Activated naive CD4-positive, alpha-beta T cell treated with anti-CD3 and anti-CD28 coated beads for 36 hours (primary cell): ENCODE measurements at regions of chr9 and their contacts with region 1.

Region 1: GRCh38 chr9:114681594-114682332 is at the start of gene TEX48:
- DNase-seq: peak; percentile 92
- H3K4me3 Mint-ChIP-seq: no peak within 1 kb of the TSS
- H3K27ac Mint-ChIP-seq: peak within 1 kb of the TSS; percentile 64
- H3K4me1 Mint-ChIP-seq: peaks cover 39% of the 10 kb centered on the region
- H3K27me3 Mint-ChIP-seq: peaks cover 4% of the 10 kb centered on the region
- total RNA-seq, gene TEX48: not detected

Region 2: GRCh38 chr9:114653556-114654159 is 28.1 kb before region 1 on chr9:
- CTCF ChIA-PET with region 1: interaction called, 12 read pairs
- intact Hi-C with region 1: no loop called
- DNase-seq: peak; percentile 92
- H3K4me3 Mint-ChIP-seq: no peak overlapping the region
- H3K27ac Mint-ChIP-seq: no peak overlapping the region
- H3K4me1 Mint-ChIP-seq: peaks cover 31% of the 10 kb centered on the region
- H3K27me3 Mint-ChIP-seq: no peaks in the 10 kb centered on the region

Region 3: DNA sequence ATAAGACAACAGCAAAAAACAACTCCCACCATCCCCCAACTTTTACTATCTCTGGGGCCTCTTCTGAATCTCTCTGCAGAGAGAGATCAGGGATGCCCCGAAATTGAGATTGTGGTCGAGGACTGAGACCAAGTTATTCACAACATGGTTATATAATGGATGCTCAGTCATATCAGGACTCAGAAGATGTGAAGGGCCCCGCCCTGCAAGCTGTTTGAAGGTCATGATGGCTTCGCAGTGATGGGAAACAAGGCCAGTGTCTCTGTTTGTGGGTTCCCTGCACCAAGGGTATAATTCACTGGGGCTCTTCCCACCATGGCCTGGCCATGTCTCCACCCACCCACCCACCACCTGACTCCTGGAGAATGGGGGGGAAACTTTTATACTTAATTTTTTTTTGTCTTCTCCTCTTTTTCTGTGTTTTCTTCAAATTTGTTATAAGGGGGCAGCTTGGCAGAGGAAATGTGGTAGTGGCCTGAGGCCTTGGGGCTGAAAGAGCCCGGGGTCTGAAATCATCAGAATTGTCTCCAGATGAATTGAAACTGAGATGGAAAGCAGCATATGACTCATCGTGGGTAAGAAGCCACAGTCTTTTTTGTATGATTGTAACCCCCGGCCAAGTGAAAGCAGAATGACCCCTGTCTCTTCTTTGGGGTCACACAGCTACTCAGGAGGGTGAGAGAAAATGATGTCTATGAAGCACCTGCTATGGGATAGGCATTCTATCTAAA is 15.2 kb after region 1 on chr9:
- CTCF ChIA-PET with region 1: interaction called, 33 read pairs
- intact Hi-C with region 1: no loop called
- DNase-seq: peak; percentile 89
- H3K4me3 Mint-ChIP-seq: peak overlapping the region; percentile 54
- H3K27ac Mint-ChIP-seq: peak overlapping the region; percentile 98
- H3K4me1 Mint-ChIP-seq: peaks cover 74% of the 10 kb centered on the region
- H3K27me3 Mint-ChIP-seq: no peaks in the 10 kb centered on the region

Region 4: GRCh38 chr9:114723931-114724330 is 42.2 kb after region 1 on chr9:
- CTCF ChIA-PET with region 1: interaction called, 19 read pairs
- intact Hi-C with region 1: loop called (anchors 5 kb)
- DNase-seq: no peak
- H3K4me3 Mint-ChIP-seq: no peak overlapping the region
- H3K27ac Mint-ChIP-seq: no peak overlapping the region
- H3K4me1 Mint-ChIP-seq: peaks cover 26% of the 10 kb centered on the region
- H3K27me3 Mint-ChIP-seq: peaks cover 5% of the 10 kb centered on the region

Region 5: DNA sequence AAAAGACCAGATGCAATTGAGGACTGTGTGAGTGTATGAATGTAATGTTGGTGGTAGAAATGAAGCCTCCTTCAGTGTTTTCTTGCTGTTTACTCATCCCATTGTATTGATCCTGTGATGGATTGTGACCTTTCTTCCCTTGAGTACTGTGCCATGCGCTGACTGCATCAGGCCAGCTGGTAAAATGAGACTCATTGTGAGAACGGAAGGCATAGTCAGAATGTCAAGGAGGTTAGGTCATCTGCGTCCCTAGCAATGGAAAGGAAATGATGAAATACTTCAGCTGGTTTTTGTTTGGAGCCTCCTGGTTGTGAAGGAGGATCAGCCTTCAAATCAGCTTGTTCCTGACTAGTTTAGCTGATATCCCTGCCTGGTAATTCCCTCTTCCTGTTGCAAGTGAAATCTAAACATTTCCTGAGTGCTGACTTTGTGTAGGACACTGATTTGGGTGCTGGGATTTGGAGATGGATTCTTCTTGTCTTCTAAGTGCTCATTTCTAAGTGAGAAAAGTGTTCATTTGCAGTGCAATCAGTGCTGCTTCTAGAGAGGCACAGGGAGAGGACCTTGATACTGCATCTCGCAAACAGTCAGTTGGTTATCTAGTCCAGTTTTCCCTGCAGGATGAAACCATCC is 213.2 kb after region 1 on chr9:
- CTCF ChIA-PET with region 1: interaction called, 22 read pairs
- intact Hi-C with region 1: no loop called
- DNase-seq: peak; percentile 80
- H3K4me3 Mint-ChIP-seq: no peak overlapping the region
- H3K27ac Mint-ChIP-seq: peak overlapping the region; percentile 85
- H3K4me1 Mint-ChIP-seq: peaks cover 56% of the 10 kb centered on the region
- H3K27me3 Mint-ChIP-seq: no peaks in the 10 kb centered on the region

Region 6: DNA sequence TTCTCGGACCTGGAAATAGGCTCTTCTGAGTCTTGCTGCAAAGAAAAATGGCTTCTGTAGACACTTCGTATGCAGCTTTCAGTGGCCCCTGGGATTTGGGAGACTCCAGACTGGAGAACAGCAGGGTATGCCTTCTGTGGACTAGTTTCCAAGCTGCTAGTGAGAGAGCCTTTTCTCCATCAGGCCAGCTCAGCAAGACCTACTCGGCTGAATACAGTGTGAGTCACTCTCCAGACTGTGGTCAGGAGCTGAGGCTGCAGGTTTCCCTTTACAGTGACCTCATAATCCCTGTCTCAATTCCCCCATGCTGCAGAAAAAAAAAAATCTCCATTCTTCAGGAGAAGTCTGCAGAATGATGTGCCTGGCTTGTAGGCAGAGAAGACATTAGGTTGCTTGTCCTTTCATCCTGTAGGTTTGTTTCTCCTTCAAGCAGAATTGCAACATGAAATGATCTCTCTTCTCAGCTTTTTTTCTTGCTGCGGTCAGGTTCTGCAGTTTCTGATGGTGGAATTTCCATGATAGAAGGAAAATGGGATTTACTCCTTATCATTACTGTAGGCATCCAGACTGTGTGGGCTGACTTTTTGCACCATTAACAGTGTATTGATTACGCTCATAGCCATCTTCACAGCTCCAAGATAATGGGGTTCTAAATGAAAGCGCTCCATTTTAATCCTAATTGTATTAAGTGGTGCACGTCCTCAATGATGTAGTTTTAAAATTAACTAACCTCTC is 326.9 kb after region 1 on chr9:
- CTCF ChIA-PET with region 1: interaction called, 156 read pairs
- intact Hi-C with region 1: no loop called
- DNase-seq: peak; percentile 41
- H3K4me3 Mint-ChIP-seq: no peak overlapping the region
- H3K27ac Mint-ChIP-seq: no peak overlapping the region
- H3K4me1 Mint-ChIP-seq: peaks cover 81% of the 10 kb centered on the region
- H3K27me3 Mint-ChIP-seq: no peaks in the 10 kb centered on the region

Region 7: DNA sequence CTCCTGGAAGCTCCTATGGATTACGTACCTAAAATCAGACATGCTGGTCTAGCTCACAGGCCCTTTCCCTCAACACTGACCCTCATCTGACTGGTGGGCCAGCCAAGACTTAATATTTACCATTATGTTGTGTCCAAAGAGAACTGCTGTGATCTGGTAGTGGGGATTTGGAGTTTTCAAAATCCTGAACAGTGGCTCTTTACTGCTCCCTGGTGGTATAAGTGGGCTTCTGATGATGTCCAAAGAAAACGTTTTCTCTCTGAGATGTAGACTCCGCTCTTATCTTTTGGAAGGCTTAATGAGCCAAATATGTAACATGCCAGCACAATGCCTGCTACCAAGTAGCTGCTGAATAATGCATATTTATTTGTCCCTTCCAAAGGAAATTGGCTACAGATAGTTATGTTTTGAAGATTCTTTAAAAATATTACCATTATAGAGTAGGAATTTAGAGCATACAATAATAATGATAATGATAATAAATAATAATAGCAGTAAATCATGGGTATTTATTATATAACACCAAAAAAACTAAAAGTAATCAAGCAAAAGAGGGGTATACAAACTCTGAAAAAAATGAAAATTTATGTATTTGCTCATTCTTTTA is 842.8 kb after region 1 on chr9:
- CTCF ChIA-PET with region 1: interaction called, 5 read pairs
- intact Hi-C with region 1: loop called (anchors 1 kb)
- DNase-seq: peak; percentile 27
- H3K4me3 Mint-ChIP-seq: no peak overlapping the region
- H3K27ac Mint-ChIP-seq: no peak overlapping the region
- H3K4me1 Mint-ChIP-seq: no peaks in the 10 kb centered on the region
- H3K27me3 Mint-ChIP-seq: peaks cover 20% of the 10 kb centered on the region